PC-9 (cell line): ENCODE measurements at regions of chr6 and their contacts with region 1.

Region 1: DNA sequence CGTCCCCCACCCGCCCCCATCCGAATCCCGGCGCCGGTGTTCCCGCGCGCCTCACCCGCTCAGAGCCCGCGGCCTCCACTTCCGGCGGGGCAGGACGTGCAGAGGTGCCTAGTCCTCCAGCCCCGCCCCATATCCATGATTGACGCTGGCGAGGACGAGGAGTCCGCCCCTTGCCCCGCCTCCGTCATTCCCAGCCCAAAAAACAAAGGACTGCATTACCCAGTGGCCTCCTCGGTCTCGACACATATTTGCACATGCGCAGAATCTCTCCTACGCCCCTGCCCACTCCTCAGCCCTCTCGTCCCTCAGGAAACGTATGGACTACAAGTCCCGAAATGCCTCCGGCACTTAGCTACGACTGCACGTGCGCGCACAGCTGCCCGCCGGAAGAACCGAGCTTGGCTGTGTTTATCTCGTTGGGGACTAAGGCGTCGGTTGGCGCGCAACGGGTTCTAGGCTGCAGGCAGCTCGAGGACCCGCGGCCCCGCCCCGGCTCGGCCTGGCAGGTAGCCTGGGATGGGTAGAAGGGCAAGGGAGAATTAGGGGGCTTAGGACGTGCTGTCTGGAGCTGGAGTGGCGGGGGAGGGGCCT is at the starts of genes KLHDC3 and MEA1:
- DNase-seq: peak; percentile 99
- H3K4me3 ChIP-seq: peak within 1 kb of the TSS; percentile 67
- H3K27ac ChIP-seq: peak within 1 kb of the TSS; percentile 18; the same call in 1 of the 2 replicates
- H3K4me1 ChIP-seq: peaks cover 18% of the 10 kb centered on the region
- H3K27me3 ChIP-seq: no peaks in the 10 kb centered on the region
- CTCF ChIP-seq: no peak
- total RNA-seq, gene KLHDC3: 104 and 122 TPM in 2 replicates
- total RNA-seq, gene MEA1: 77.0 and 77.6 TPM in 2 replicates

Region 2: DNA sequence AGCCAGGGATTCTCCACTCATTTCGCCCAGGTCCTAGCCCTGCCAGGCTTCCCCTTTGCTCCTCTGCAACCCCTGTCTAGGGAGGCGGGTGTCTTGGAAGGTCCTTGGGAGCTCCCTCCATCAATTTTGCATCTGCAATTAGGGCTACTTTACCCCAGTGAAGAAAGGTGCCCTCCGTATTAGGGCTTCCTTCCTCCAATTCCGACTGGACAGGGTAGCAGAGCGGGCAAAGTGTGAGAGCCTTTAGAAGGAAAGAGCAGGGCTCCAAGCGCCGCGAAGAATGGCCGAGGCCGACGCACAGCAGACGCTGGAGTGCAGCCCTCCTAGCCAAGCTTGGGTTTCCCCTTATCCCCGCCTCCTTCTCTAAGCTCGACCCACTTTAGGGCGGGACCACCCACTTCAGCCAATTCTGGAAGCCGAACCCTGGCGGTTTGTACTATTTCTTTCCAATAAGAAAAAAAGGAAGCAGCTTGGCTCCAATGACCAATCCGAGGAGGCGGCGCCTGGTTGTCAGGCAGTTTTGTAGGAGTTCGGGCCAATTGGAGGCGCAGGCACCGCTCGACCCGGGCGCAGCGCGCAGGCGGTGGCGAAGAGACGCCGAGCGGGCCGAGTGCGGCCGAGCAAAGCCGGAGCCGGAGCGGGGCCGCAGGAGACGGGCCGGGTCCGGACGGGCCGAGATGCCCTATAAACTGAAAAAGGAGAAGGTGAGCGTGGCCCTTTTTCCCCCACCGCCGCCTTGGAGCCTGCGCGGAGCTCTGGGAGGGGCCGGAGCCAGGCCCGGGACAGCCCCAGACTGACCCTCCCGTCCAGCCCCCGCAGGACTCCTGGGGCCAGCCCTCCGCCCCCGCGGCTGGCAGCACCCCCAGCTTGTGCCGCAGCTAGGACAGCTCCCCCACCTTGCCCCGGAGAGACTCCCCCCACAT is 29.7 kb before region 1 on chr6 and contains the start of gene PPP2R5D:
- CTCF ChIA-PET with region 1: no interaction called
- POLR2A ChIA-PET with region 1: interaction called, 13 read pairs
- intact Hi-C with region 1: no loop called
- DNase-seq: peak; percentile 96
- H3K4me3 ChIP-seq: peak within 1 kb of the TSS; percentile 60
- H3K27ac ChIP-seq: no peak within 1 kb of the TSS
- H3K4me1 ChIP-seq: peaks cover 17% of the 10 kb centered on the region; the same call in 1 of the 2 replicates
- H3K27me3 ChIP-seq: no peaks in the 10 kb centered on the region
- CTCF ChIP-seq: no peak
- total RNA-seq, gene PPP2R5D: 42.9 and 53.7 TPM in 2 replicates

Region 3: DNA sequence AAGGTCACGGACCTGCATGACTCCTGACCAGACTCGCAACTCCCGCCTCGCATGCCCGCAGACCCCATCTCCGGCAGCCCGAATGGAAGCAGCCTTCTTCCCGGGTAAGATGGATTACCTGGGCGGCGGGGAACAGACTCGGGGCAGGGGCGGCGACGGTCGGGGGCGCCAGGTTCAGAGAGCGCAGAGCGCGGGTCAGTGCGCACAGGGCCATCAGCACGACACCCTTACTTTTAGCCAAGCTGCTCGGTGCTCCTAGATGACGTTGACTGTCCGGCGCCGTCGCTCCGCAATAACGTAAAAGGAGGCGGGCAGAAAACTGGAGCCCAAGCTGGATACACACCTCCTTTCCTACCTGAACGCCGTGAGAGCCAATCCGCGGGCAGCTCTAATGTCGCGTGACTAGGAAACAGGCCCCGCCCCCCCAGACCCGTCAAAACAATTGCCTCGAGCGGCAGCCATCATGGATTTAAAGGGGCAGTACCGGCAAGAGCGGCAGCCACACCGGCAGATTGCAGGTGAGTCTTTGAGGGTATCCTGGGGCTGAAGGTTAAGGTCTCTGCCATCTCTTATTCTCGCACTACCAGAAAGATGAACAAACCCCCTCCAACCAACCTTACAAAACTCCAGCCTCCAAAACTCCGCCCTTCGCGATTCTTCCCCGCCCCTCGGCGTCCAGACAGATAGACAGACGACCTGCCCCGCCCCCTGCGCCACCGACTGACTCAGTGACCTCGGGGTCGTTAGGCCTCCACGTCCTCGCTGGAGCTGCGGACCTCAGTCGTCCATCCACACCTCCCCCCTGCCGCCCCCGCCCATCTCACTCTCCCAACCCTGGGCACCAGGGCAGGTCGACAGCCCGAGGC is 45.5 kb after region 1 on chr6 and contains the starts of genes KLC4 and MRPL2:
- CTCF ChIA-PET with region 1: no interaction called
- POLR2A ChIA-PET with region 1: interaction called, 7 read pairs
- intact Hi-C with region 1: loop called (anchors 5 kb)
- DNase-seq: peak; percentile 94 to 95
- H3K4me3 ChIP-seq: peak within 1 kb of the TSS; percentile 80
- H3K27ac ChIP-seq: peak within 1 kb of the TSS; percentile 61
- H3K4me1 ChIP-seq: peaks cover 22% of the 10 kb centered on the region
- H3K27me3 ChIP-seq: no peaks in the 10 kb centered on the region
- CTCF ChIP-seq: no peak
- total RNA-seq, gene KLC4: 46.2 and 46.7 TPM in 2 replicates
- total RNA-seq, gene MRPL2: 86.2 and 110 TPM in 2 replicates

Region 4: DNA sequence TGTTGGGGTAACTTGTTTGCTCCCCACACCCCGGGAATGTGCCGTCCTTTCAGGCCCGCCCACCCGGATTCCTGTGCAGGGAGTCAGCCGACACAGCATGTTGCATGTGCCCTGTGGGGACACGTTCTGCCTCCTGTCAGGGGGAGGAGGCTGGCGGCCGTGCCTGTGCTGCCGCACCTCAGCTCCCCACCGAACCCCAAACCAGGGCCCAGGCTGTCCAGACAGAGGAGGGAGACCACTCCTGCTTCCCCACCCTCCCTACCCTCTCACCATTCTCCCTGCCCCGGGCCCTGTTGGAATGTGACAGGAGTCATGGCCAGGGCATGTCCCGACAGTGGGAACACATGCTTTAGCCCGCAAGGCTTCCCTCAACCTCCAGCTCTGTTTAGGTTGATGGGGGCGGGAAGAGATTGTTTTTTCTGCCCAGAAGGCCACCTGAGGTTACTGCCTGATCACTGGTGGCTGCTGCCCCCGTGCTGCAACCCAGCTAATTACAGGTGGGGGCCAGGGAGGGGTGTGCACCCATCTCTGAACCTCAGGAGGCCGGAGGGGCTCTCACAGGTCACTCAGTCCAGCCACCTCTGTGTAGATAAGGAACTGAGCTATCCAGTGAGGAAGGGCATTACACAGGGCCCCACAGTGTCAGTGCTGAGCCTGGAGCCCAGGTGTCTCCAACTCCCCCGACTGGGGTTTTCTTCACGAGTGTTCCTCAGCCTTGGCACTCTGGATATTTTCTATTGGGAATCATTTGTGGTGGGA is 482.6 kb after region 1 on chr6:
- CTCF ChIA-PET with region 1: no interaction called
- POLR2A ChIA-PET with region 1: no interaction called
- intact Hi-C with region 1: no loop called
- DNase-seq: peak; percentile 73 to 78
- H3K4me3 ChIP-seq: no peak overlapping the region
- H3K27ac ChIP-seq: peak overlapping the region; percentile 57
- H3K4me1 ChIP-seq: peaks cover 31% of the 10 kb centered on the region
- H3K27me3 ChIP-seq: no peaks in the 10 kb centered on the region
- CTCF ChIP-seq: peak; percentile 82